CD4-positive, alpha-beta memory T cell (primary cell): ENCODE measurements at regions of chr3 and their contacts with region 1.

Region 1: GRCh38 chr3:114418724-114419543 is 125.1 kb downstream of the TIGIT start:
- DNase-seq: peak; percentile 51 to 68 (median 65)
- H3K4me3 ChIP-seq: no peak overlapping the region
- H3K4me3 Mint-ChIP-seq: no peak overlapping the region
- H3K27ac ChIP-seq: no peak overlapping the region
- H3K27ac Mint-ChIP-seq: peak overlapping the region in 2 of 7 donors; percentile 11 to 19
- H3K4me1 ChIP-seq: peaks cover 3% of the 10 kb centered on the region
- H3K4me1 Mint-ChIP-seq: peaks cover 3 to 7% (median 5%) of the 10 kb centered on the region in 4 donors
- H3K27me3 ChIP-seq: no peaks in the 10 kb centered on the region
- H3K27me3 Mint-ChIP-seq: no peaks in the 10 kb centered on the region

Region 2: DNA sequence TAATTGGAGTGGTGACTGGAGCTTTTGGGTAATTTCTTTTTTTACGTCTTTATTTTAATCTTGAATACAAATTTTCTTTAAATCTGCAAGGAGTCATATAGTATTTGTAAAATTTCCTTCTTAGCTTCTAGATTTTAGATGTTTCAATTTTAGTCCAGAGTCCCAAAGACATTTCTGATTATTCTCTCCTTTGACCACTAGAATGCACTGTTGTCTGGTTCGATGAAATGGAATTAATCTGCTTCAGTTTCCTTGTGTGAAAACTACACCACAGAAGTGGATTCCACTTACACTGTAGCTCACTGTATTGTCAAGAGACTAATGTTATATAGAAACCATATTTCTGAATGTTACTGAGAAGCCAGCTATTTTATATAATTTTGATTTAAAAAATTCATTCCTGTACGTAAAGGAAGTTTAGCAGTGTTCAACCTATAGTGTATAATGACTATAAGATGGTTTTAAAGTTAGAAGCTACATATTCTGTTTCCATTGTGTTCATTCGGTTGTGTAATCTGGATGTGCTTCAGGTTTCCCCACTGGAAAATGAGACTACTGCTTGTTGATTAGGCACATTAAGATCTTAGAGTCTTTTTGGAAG is 574.2 kb before region 1 on chr3:
- CTCF ChIA-PET with region 1: interaction called, 3 read pairs
- POLR2A ChIA-PET with region 1: no interaction called
- intact Hi-C with region 1: loop called (anchors 1 kb)
- DNase-seq: peak in 4 of 5 donors; percentile 6 to 18 (median 14)
- H3K4me3 ChIP-seq: no peak overlapping the region
- H3K4me3 Mint-ChIP-seq: no peak overlapping the region
- H3K27ac ChIP-seq: no peak overlapping the region
- H3K27ac Mint-ChIP-seq: no peak overlapping the region
- H3K4me1 ChIP-seq: no peaks in the 10 kb centered on the region
- H3K4me1 Mint-ChIP-seq: peaks cover 0 to 3% (median 0%) of the 10 kb centered on the region in 4 donors
- H3K27me3 ChIP-seq: no peaks in the 10 kb centered on the region
- H3K27me3 Mint-ChIP-seq: peaks cover 0 to 1% of the 10 kb centered on the region in 2 donors

Region 3: DNA sequence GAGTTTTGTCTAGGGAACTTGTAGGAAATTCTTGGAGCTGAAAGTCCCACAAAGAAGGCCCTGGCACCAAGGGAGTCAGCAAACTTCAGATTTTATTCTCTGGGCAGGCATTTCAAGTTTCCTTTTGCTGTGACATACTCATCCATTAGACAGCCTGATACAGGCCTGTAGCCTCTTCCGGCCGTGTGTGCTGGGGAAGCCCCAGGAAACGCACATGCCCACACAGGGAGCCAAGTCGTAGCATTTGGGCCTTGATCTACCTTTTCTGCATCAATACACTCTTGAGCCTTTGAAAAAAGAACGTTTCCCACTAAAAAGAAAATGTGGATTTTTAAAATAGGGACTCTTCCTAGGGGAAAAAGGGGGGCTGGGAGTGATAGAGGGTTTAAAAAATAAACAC is 110.1 kb before region 1 on chr3:
- CTCF ChIA-PET with region 1: interaction called, 4 read pairs
- POLR2A ChIA-PET with region 1: no interaction called
- intact Hi-C with region 1: loop called (anchors 5 kb)
- DNase-seq: peak; percentile 68 to 83 (median 72)
- H3K4me3 ChIP-seq: peak overlapping the region in 1 of 2 donors; percentile 12
- H3K4me3 Mint-ChIP-seq: peak overlapping the region; percentile 37 to 88 (median 68)
- H3K27ac ChIP-seq: peak overlapping the region; percentile 88
- H3K27ac Mint-ChIP-seq: peak overlapping the region; percentile 92 to 98 (median 95)
- H3K4me1 ChIP-seq: peaks cover 72% of the 10 kb centered on the region
- H3K4me1 Mint-ChIP-seq: peaks cover 53 to 66% (median 59%) of the 10 kb centered on the region in 4 donors
- H3K27me3 ChIP-seq: no peaks in the 10 kb centered on the region
- H3K27me3 Mint-ChIP-seq: no peaks in the 10 kb centered on the region

Region 4: GRCh38 chr3:114383875-114384557 is 34.9 kb before region 1 on chr3:
- CTCF ChIA-PET with region 1: interaction called, 76 read pairs
- POLR2A ChIA-PET with region 1: interaction called, 3 read pairs
- intact Hi-C with region 1: loop called (anchors 1 kb)
- DNase-seq: peak; percentile 39 to 50 (median 47)
- H3K4me3 ChIP-seq: peak overlapping the region in 1 of 2 donors; percentile 33
- H3K4me3 Mint-ChIP-seq: peak overlapping the region in 7 of 8 donors; percentile 74 to 89 (median 85)
- H3K27ac ChIP-seq: no peak overlapping the region
- H3K27ac Mint-ChIP-seq: peak overlapping the region in 5 of 7 donors; percentile 38 to 76 (median 61)
- H3K4me1 ChIP-seq: peaks cover 16% of the 10 kb centered on the region
- H3K4me1 Mint-ChIP-seq: peaks cover 8 to 15% (median 12%) of the 10 kb centered on the region in 4 donors
- H3K27me3 ChIP-seq: no peaks in the 10 kb centered on the region
- H3K27me3 Mint-ChIP-seq: no peaks in the 10 kb centered on the region

Region 5: DNA sequence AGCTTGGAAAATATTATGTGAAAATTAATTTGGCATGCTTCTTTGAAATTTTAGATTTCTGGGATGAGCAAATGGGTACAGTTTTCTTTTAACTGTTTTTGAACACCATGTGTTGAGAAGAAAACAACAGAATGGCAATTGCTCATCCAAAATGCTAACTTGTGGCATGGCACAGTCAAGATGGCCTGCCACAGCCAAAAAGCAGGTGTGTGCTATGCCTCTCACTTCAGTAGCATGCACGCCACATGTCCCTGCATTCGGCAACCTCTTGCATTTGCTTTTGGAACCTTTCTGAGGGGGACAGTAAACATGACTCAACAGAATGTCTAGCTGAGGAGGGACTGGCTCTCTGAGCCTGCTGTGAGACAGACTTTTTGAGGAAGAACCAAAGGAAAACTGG is 13.4 kb after region 1 on chr3:
- CTCF ChIA-PET with region 1: interaction called, 16 read pairs
- POLR2A ChIA-PET with region 1: no interaction called
- intact Hi-C with region 1: no loop called
- DNase-seq: no peak
- H3K4me3 ChIP-seq: no peak overlapping the region
- H3K4me3 Mint-ChIP-seq: no peak overlapping the region
- H3K27ac ChIP-seq: no peak overlapping the region
- H3K27ac Mint-ChIP-seq: no peak overlapping the region
- H3K4me1 ChIP-seq: no peaks in the 10 kb centered on the region
- H3K4me1 Mint-ChIP-seq: peaks cover 0 to 5% (median 0%) of the 10 kb centered on the region in 4 donors
- H3K27me3 ChIP-seq: no peaks in the 10 kb centered on the region
- H3K27me3 Mint-ChIP-seq: no peaks in the 10 kb centered on the region